Tibial artery (tissue), 4 donors: ENCODE measurements at regions of chr2 and their contacts with region 1.

Region 1: GRCh38 chr2:120680136-120680761 is 55.4 kb upstream of the GLI2 start:
- DNase-seq: peak; percentile 80 to 84
- H3K4me3 ChIP-seq: no peak overlapping the region
- H3K27ac ChIP-seq: no peak overlapping the region
- H3K4me1 ChIP-seq: peaks cover 0 to 13% (median 5%) of the 10 kb centered on the region in 4 donors
- H3K27me3 ChIP-seq: peaks cover 0 to 59% of the 10 kb centered on the region in 2 donors
- CTCF ChIP-seq: peak; percentile 45 to 88

Region 2: GRCh38 chr2:120436885-120437603 is 243.2 kb before region 1 on chr2:
- intact Hi-C with region 1: loop called (anchors 10 kb)
- DNase-seq: no peak
- H3K4me3 ChIP-seq: no peak overlapping the region
- H3K27ac ChIP-seq: no peak overlapping the region
- H3K4me1 ChIP-seq: peaks cover 5 to 9% (median 6%) of the 10 kb centered on the region in 4 donors
- H3K27me3 ChIP-seq: peaks cover 0 to 33% of the 10 kb centered on the region in 2 donors
- CTCF ChIP-seq: no peak

Region 3: GRCh38 chr2:120511947-120512710 is 168.1 kb before region 1 on chr2:
- intact Hi-C with region 1: loop called (anchors 5 kb)
- DNase-seq: no peak
- H3K4me3 ChIP-seq: no peak overlapping the region
- H3K27ac ChIP-seq: no peak overlapping the region
- H3K4me1 ChIP-seq: peaks cover 0 to 24% (median 18%) of the 10 kb centered on the region in 4 donors
- H3K27me3 ChIP-seq: no peaks in the 10 kb centered on the region
- CTCF ChIP-seq: no peak

Region 4: GRCh38 chr2:120552800-120553481 is 127.3 kb before region 1 on chr2:
- intact Hi-C with region 1: loop called (anchors 10 kb)
- DNase-seq: peak; percentile 75 to 93
- H3K4me3 ChIP-seq: no peak overlapping the region
- H3K27ac ChIP-seq: no peak overlapping the region
- H3K4me1 ChIP-seq: peaks cover 0 to 30% (median 23%) of the 10 kb centered on the region in 4 donors
- H3K27me3 ChIP-seq: no peaks in the 10 kb centered on the region
- CTCF ChIP-seq: peak; percentile 74 to 79